Right ventricle myocardium inferior (tissue), 1 donor: ENCODE measurements at regions of chrX and their contacts with region 1.

Region 1: DNA sequence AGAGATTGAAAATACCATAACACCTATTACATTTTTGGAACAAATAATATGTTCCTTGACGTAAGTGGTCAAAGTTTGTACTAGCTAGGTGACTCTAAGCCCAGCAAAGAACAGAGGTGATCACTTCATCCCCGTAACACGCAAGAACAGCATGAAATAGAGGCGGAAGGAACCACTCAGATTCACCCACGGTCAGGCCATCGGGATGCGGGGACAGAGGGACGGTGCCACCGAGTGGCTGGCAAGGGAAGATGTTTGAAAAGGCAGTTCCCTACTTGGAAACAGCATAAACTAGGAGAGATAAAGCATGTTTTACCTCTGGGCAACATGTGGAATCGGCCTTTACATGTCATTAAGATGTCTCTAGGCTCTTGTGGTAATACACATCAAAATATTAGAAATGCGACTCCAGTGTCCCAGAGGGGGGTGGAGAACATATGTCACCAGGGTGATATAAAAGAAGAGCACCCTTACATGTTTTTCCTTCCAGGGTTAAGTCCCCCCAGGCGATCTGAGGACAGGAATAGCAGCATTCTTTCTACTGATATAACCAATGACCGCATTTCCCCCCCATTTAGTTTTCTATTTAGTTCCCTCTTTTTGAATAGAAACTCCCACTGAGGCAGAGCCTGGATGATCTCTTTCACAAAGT is 84.0 kb downstream of the PHKA2 start:
- DNase-seq: no peak
- ATAC-seq: no peak

Region 2: DNA sequence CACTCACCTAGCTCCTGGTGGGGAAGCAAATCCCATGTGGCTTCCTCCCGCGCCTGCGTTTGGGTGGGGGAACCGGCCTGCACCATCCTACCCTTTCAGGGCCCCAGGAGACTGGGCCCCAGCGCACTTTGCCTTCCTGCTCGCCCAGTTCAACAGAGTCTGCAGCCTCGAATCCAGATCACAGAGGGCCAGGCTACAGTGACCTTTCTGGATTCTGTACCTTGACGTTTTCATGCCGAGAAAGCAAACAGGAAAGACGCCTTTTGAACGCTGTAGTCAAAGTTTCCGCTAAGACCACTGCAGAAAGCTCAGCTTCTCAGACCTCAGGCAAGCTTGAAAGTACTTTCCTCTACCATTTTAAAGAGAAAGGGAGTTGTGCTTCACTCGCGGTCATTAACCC is 671.9 kb before region 1 on chrX:
- intact Hi-C with region 1: no loop called
- DNase-seq: no peak
- ATAC-seq: no peak

Region 3: DNA sequence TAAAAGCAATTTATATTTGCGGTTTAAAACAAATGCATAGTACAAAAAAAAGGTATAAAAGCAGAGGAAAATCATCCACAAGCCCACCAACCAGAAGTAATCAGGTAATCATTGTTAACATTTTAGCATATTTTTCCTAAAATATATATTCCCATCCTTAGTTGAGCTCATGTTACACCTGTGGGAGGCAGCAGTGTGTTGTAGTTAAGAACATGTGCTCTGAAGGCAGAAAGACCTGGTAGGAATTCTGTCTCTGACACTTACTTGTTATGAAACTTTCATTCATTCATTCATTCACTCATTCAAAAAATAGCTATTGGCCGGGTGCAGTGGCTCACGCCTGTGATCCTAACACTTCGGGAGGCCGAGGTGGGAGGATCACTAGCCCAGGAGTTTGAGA is 489.9 kb before region 1 on chrX:
- intact Hi-C with region 1: loop called (anchors 5 kb)
- DNase-seq: no peak
- ATAC-seq: no peak

Region 4: GRCh38 chrX:18946157-18946556 is 46.2 kb after region 1 on chrX:
- intact Hi-C with region 1: no loop called
- DNase-seq: no peak
- ATAC-seq: no peak

Region 5: DNA sequence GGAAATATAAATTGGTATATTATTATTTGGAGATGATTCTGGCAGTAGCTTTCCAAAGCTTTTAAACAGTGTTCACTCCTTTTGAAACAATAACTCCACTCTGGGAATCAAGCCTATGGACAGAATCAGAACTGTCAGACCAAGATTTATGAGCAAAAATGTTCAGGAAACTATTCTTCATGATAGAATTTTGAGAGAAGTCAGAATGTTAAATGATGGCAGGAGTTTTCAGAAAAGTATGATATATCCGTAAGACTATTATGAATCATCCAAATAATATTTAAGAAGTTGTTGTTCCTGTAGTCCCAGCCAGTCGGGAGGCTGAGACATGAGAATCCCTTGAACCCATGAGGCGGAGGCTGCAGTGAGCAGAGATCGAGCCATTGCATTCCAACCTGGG is 272.8 kb after region 1 on chrX:
- intact Hi-C with region 1: no loop called
- DNase-seq: no peak
- ATAC-seq: no peak